ENCODE measurements at regions of chr16 and their contacts with region 1.

Region 1: DNA sequence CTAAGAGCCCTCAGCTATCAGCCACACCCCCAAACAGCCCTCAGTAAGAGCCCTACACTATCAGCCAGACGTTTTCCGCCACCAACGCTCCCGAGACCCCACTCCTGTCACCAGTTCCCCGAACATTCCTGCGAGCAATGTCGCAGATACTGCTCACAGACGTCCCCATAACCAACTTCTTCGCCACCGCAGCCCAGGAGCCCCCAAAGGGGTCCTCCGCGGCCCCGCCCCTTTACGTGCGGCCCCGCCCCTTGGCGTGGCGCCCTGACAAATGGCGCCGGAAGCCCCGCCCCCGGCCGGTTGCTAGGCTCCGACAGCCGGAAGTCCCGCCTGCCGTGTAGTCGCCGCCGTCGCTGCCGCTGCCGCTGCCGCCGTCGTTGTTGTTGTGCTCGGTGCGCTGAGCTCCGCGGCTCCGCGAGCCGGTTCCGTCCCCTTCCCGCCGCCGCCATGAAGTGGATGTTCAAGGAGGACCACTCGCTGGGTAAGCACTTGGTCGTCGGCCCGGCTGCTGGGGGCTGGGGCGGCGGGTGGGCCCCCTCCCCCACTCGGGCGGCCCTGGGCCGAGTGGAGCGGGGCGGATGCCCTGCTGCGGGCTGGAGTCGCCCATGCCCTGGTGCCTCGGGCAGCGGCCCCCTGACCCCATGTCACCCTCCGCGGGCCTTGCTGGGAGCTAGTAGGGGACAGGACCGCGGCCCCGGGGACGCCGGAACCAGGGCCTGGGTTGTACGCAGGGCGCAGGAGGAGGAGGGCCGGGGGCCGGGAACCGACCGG is at the start of gene GABARAPL2:
- DNase-seq: peak; percentile 87 to 95 (median 91)
- H3K4me3 ChIP-seq: peak within 1 kb of the TSS; percentile 68 to 100
- H3K4me3 Mint-ChIP-seq: peak within 1 kb of the TSS; percentile 89 to 100 (median 97)
- H3K27ac ChIP-seq: peak within 1 kb of the TSS; percentile 82
- H3K27ac Mint-ChIP-seq: peak within 1 kb of the TSS; percentile 84 to 100 (median 97)
- H3K4me1 ChIP-seq: peaks cover 48% of the 10 kb centered on the region
- H3K4me1 Mint-ChIP-seq: peaks cover 26 to 57% (median 38%) of the 10 kb centered on the region in 4 donors
- H3K27me3 ChIP-seq: no peaks in the 10 kb centered on the region
- H3K27me3 Mint-ChIP-seq: peaks cover 0 to 7% of the 10 kb centered on the region in 2 donors
- total RNA-seq, gene GABARAPL2: 91.9 to 100 TPM

Region 2: DNA sequence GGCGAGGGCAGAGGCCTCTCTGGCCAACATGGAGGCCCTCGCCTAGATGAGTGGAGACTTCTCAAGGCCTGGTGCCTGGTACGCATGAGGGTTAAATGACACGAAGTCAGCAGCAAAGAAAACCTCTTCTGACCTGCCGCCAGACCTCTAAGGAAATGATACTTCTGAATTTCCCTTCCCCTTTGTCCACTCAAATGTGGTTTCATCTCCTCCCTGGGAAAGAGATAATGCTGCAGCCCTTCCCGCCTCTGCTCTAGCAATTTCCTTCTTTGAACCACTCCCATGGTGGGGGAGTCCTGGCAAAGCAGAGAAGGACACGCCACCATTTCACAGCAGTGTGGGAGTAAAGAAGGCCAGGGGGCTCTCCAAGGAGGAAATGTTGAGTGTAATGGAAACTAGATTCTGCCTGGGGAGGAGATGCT is 249.1 kb before region 1 on chr16:
- CTCF ChIA-PET with region 1: no interaction called
- POLR2A ChIA-PET with region 1: no interaction called
- intact Hi-C with region 1: no loop called
- DNase-seq: no peak
- H3K4me3 ChIP-seq: no peak overlapping the region
- H3K4me3 Mint-ChIP-seq: no peak overlapping the region
- H3K27ac ChIP-seq: no peak overlapping the region
- H3K27ac Mint-ChIP-seq: no peak overlapping the region
- H3K4me1 ChIP-seq: peaks cover 25% of the 10 kb centered on the region
- H3K4me1 Mint-ChIP-seq: peaks cover 21 to 30% (median 25%) of the 10 kb centered on the region in 4 donors
- H3K27me3 ChIP-seq: no peaks in the 10 kb centered on the region
- H3K27me3 Mint-ChIP-seq: no peaks in the 10 kb centered on the region

Region 3: DNA sequence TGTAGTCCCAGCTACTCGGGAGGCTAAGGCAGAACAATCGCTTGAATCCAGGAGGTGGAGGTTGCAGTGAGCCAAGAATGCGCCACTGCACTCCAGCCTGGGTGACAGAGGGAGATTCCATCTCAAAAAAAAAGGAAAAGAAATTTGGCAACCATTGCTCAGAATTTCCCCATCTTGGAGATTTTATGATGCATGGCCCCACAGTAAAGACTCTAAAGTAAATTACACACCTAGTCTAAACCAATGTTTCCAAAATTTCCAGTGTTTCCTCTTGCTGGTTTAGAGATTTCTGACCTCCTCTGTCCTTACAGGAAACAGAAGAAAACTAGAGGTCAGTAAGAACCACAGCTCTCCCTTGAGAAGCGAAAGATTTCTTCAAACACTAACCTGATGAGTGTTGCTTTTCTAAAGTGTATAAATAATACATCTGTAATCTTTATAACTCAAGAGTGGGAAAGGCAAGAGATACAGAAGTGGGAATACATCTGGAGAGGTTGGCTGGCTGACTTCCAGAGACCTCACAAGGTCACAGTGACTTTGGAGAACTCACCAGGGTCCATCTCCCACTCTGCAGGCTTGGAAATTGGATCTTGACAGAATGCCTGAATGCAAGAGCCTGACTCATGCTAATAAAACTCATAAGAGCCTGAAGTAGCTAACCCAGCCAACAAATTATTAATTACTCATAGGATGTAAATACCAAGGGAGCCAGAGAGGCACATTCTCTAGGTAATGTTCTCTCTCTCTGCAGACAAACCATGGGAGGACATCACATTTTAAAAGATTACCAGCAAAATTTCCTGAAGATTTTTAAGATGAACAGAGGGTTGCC is 48.1 kb after region 1 on chr16:
- CTCF ChIA-PET with region 1: interaction called, 9 read pairs
- POLR2A ChIA-PET with region 1: interaction called, 69 read pairs
- intact Hi-C with region 1: no loop called
- DNase-seq: no peak
- H3K4me3 ChIP-seq: no peak overlapping the region
- H3K4me3 Mint-ChIP-seq: peak overlapping the region in 2 of 8 donors; percentile 54 to 57
- H3K27ac ChIP-seq: no peak overlapping the region
- H3K27ac Mint-ChIP-seq: peak overlapping the region in 6 of 7 donors; percentile 11 to 85 (median 38)
- H3K4me1 ChIP-seq: peaks cover 44% of the 10 kb centered on the region
- H3K4me1 Mint-ChIP-seq: peaks cover 22 to 41% (median 32%) of the 10 kb centered on the region in 4 donors
- H3K27me3 ChIP-seq: no peaks in the 10 kb centered on the region
- H3K27me3 Mint-ChIP-seq: no peaks in the 10 kb centered on the region

Region 4: DNA sequence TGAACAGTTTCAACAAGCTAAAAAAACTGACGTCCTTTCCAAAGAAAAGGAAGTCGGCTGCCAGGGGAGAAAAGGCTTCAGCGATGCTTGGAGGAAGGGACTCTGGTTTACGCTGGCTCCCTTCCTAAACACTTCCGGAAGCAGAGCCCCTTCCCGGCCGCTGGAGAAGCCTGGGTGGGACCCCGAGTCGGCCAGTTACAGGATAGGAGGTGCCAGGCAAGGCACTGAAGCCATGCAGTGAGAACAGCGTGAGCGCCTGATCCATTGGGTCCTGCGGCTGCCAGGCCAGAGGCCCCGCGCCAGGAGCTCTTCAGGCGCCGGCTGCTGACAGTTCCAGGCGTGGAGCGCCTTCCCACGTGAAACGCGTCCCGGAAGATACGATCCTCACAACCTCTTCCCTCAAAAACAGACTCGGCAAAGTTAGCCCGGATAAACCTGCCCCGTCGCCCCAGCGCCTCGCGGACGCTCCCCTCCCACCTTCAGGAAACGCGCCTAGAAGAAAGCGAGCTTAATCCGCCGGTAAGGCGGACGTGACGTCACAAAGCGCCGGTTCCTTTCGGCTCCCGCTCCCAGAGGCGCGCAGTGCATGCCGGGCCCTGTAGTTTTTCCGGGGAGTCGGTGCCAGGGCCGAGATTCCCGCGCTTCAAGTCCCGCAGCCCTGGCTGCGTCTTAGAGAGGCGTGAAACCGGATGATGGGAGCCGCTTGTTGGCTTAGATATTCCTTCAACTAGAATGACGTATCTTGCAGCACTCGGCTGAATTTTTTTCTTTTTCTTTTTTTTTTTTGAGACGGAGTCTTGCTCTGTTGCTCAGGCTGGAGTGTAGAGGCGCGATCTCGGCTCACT is 56.8 kb after region 1 on chr16 and contains the start of gene ADAT1:
- CTCF ChIA-PET with region 1: interaction called, 9 read pairs
- POLR2A ChIA-PET with region 1: interaction called, 69 read pairs
- intact Hi-C with region 1: loop called (anchors 1 kb)
- DNase-seq: peak; percentile 95 to 99 (median 98)
- H3K4me3 ChIP-seq: peak within 1 kb of the TSS; percentile 86 to 90
- H3K4me3 Mint-ChIP-seq: peak within 1 kb of the TSS; percentile 90 to 98 (median 97)
- H3K27ac ChIP-seq: peak within 1 kb of the TSS; percentile 96
- H3K27ac Mint-ChIP-seq: peak within 1 kb of the TSS; percentile 97 to 99 (median 98)
- H3K4me1 ChIP-seq: peaks cover 59% of the 10 kb centered on the region
- H3K4me1 Mint-ChIP-seq: peaks cover 46 to 87% (median 58%) of the 10 kb centered on the region in 4 donors
- H3K27me3 ChIP-seq: no peaks in the 10 kb centered on the region
- H3K27me3 Mint-ChIP-seq: peaks cover 0 to 3% of the 10 kb centered on the region in 2 donors
- total RNA-seq, gene ADAT1: 88.3 to 93.9 TPM

Region 5: GRCh38 chr16:75789237-75789636 is 223.0 kb after region 1 on chr16:
- CTCF ChIA-PET with region 1: no interaction called
- POLR2A ChIA-PET with region 1: no interaction called
- intact Hi-C with region 1: no loop called
- DNase-seq: peak in 4 of 5 donors; percentile 33 to 40 (median 36)
- H3K4me3 ChIP-seq: no peak overlapping the region
- H3K4me3 Mint-ChIP-seq: peak overlapping the region in 1 of 8 donors; percentile 33
- H3K27ac ChIP-seq: no peak overlapping the region
- H3K27ac Mint-ChIP-seq: no peak overlapping the region
- H3K4me1 ChIP-seq: no peaks in the 10 kb centered on the region
- H3K4me1 Mint-ChIP-seq: no peaks in the 10 kb centered on the region
- H3K27me3 ChIP-seq: no peaks in the 10 kb centered on the region
- H3K27me3 Mint-ChIP-seq: peaks cover 12 to 18% of the 10 kb centered on the region in 2 donors